HAP-1 (cell line): ENCODE measurements at regions of chr17 and their contacts with region 1.

Region 1: DNA sequence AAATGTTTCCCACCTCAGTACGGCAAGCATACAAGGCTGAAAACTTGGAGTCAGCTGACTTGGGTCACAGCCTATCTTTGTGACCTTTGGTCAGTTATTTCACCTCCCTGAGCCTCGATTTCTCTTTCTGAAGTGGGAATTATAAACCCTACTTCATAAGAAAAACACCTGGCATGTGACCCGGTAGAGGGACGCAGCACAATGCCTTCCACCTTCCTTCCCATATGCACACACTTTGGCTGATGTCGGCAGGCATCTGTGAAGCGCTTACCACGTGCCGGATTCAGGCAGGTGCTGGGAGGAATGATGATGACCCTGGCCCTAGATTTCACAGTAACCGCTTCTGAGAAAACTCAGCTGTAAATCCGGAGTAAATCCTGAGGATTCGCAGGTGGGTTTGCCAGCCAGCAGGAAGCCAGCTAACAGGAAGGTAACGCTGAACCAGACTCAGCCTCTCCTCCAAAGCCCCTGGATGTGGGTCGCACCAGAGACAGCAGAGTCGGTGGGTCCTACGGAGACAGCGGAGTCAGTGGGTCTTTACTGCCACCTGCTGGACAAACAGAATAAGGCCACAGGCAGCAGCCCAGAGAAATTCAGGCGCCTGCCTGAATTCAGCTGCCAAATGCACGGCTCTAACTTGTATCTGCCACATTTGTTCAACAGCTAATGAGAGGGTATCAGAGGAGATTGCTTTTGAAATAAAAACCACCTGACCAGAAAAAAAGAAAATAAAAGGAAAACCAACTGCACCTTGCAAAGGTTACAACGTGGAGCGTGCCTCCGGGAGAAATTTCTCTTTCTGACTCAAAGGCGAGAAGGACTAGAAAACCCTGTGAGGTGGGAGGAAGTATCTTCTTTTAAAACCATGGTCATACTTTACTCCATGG is 16.6 kb downstream of the COPRS start:
- DNase-seq: peak; percentile 71 to 85
- H3K4me3 ChIP-seq: no peak overlapping the region
- H3K4me1 ChIP-seq: no peaks in the 10 kb centered on the region
- H3K27me3 ChIP-seq: peaks cover 3% of the 10 kb centered on the region; the same call in 1 of the 2 replicates

Region 2: GRCh38 chr17:31425282-31426040 is 417.0 kb before region 1 on chr17:
- in situ Hi-C with region 1: loop called (anchors 25 kb)
- DNase-seq: peak in 1 of 2 experiments; percentile 68
- H3K4me3 ChIP-seq: no peak overlapping the region
- H3K4me1 ChIP-seq: peaks cover 6% of the 10 kb centered on the region
- H3K27me3 ChIP-seq: no peaks in the 10 kb centered on the region

Region 3: DNA sequence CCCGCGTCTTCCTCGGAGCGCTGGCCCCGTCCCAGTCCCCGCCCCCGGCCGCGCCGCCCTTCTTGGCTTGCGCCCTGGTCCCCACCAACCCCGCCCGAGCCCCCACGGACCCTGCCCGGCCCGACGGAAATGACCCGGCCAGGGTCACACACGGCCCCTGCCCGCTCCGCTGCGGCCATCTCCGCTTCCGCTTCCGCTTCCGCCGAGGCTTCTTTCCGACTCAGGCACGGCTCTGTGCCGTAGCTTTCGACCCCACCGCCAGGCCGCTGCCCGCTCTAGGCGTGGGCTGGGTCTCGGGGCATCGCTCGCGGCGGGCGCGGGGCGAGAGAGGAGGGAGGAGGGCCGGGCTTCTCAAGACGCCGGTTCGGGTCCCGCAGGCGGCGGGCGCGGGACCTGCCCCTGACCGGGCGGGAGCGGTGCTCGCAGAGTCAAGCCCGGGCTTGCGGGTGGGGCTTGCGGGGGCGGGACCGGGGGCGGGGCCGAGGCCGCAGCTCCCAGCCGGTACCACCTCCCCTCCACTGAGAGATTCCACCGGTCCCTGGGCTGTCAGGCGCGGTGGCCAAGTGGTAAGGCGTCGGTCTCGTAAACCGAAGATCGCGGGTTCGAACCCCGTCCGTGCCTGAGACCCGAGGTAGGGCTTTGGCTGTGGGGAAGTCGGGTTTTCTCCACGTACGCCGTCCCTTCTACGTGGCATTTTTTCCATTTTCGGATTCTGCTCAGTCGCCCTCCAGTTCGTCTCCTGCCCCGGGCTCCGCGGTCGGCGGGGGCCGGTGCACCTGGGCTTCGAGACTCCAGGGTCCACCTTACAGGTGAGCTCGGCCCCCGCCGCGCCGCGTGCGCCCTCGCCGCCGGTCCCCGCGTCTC is 292.7 kb before region 1 on chr17:
- in situ Hi-C with region 1: loop called (anchors 5 kb)
- DNase-seq: peak; percentile 84 to 94
- H3K4me3 ChIP-seq: peak overlapping the region; percentile 93
- H3K4me1 ChIP-seq: peaks cover 8% of the 10 kb centered on the region; the same call in 1 of the 2 replicates
- H3K27me3 ChIP-seq: no peaks in the 10 kb centered on the region